SK-N-SH (cell line): ENCODE measurements at regions of chr17 and their contacts with region 1.

Region 1: GRCh38 chr17:75632863-75633485 is at the start of gene SMIM5:
- DNase-seq: peak; percentile 98
- H3K4me3 ChIP-seq: no peak within 1 kb of the TSS; a peak in 1 of 4 replicates
- H3K27ac ChIP-seq: peak within 1 kb of the TSS in 1 of 2 experiments; percentile 59; a peak in 3 of 4 replicates
- H3K4me1 ChIP-seq: peaks cover 12 to 15% of the 10 kb centered on the region in 2 experiments; a peak in 3 of 4 replicates
- H3K27me3 ChIP-seq: no peaks in the 10 kb centered on the region
- CTCF ChIP-seq: peak; percentile 99
- EP300 ChIP-seq: no peak
- RAD21 ChIP-seq: peak; percentile 72
- polyA plus RNA-seq, gene SMIM5: 0.02 TPM in 1 of 2 replicates, not detected in the other

Region 2: DNA sequence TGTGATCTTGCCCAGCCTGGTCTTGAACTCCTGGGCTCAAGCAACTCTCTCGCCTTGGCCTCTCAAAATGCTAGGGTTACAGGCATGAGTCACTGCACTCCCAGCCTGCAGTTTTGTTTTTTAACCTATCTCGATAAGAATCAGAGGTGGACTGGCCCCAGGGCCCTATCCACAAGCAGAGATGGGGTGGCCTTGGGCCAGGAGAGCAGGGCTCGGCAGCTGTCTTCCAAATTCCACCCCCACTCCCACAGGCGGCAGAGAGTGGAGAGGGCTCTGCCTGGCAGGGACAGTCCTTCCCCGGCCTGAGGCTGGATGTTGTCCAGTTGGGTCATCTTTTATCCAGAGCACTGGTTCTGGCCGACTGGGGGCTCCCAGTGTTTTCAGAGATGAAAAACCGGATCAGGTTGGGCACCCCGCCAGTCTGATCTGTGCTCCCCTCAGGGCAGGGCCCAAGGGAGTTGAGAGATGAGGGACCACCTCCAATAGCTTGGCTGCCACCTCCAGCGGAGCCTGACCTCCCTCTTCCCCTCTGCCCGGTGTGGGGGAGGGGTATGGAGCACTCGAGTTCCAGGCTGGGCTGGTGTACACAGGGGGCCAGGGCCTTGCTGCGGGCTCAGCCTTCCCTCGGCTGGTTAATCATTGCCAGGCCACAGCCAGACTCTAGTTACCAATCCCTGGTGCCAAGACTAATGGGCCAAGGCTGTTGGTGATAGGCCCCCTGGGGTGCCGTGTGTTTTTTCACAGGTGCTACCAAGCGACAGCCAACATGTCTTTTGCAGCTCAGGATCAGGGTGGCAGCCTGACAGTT is 75.7 kb before region 1 on chr17:
- CTCF ChIA-PET with region 1: interaction called, 20 read pairs
- POLR2A ChIA-PET with region 1: no interaction called
- DNase-seq: peak; percentile 83
- H3K4me3 ChIP-seq: no peak overlapping the region
- H3K27ac ChIP-seq: peak overlapping the region in 1 of 2 experiments; percentile 65; a peak in 2 of 4 replicates
- H3K4me1 ChIP-seq: peaks cover 4 to 19% of the 10 kb centered on the region in 2 experiments; a peak in 1 of 4 replicates
- H3K27me3 ChIP-seq: no peaks in the 10 kb centered on the region
- CTCF ChIP-seq: no peak
- EP300 ChIP-seq: no peak
- RAD21 ChIP-seq: no peak

Region 3: DNA sequence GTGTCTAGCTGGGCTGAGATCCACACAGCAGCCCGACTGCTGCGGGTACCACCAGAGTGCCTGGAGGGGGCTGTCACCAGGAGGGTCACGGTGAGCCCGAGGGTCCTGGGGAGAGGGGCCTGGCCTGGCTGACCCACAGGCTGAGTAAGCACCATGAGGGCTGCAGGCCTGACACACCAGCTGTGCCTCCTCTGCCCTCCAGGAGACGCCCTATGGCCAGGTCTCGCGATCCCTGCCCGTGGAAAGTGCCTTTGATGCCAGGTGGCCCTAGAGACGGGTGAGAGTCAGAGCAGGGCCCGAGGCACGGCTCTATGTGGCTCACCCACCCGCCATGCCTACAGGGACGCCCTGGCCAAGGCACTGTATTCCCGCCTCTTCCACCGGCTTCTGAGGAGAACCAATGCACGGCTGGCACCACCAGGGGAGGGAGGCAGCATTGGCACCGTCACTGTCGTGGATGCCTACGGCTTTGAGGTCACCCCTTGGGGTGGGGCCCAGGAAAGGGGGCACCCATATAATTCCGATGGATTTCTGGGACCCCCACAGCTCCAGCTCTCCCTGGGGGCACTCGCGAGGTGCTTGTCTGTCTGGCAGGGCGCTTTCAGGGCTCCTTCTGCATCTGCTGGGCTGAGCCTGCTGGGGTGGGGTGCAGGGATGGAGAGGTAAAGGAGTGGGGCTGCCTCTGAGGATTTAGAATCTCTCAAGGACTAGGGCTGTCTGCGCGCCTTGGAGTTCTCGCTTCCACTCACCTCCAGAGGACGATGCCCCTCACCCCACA is 38.3 kb before region 1 on chr17:
- CTCF ChIA-PET with region 1: interaction called, 68 read pairs
- POLR2A ChIA-PET with region 1: no interaction called
- DNase-seq: no peak
- H3K4me3 ChIP-seq: no peak overlapping the region
- H3K27ac ChIP-seq: no peak overlapping the region
- H3K4me1 ChIP-seq: peaks cover 0 to 8% of the 10 kb centered on the region in 2 experiments; a peak in 1 of 4 replicates
- H3K27me3 ChIP-seq: no peaks in the 10 kb centered on the region
- CTCF ChIP-seq: no peak
- EP300 ChIP-seq: no peak
- RAD21 ChIP-seq: 0 out of 2 replicates have a peak, but pooled peaks have one; percentile 4

Region 4: GRCh38 chr17:75667021-75667790 is 34.2 kb after region 1 on chr17 and contains the starts of genes RECQL5 and SAP30BP:
- CTCF ChIA-PET with region 1: interaction called, 1,189 read pairs
- POLR2A ChIA-PET with region 1: no interaction called
- DNase-seq: peak; percentile 96
- H3K4me3 ChIP-seq: peak within 1 kb of the TSS; percentile 94 to 97
- H3K27ac ChIP-seq: peak within 1 kb of the TSS; percentile 79 to 81
- H3K4me1 ChIP-seq: peaks cover 12 to 16% of the 10 kb centered on the region in 2 experiments; a peak in 3 of 4 replicates
- H3K27me3 ChIP-seq: no peaks in the 10 kb centered on the region
- CTCF ChIP-seq: no peak
- EP300 ChIP-seq: no peak
- RAD21 ChIP-seq: no peak
- polyA plus RNA-seq, gene RECQL5: 22.5 and 25.3 TPM in 2 replicates
- polyA plus RNA-seq, gene SAP30BP: 145 and 158 TPM in 2 replicates

Region 5: DNA sequence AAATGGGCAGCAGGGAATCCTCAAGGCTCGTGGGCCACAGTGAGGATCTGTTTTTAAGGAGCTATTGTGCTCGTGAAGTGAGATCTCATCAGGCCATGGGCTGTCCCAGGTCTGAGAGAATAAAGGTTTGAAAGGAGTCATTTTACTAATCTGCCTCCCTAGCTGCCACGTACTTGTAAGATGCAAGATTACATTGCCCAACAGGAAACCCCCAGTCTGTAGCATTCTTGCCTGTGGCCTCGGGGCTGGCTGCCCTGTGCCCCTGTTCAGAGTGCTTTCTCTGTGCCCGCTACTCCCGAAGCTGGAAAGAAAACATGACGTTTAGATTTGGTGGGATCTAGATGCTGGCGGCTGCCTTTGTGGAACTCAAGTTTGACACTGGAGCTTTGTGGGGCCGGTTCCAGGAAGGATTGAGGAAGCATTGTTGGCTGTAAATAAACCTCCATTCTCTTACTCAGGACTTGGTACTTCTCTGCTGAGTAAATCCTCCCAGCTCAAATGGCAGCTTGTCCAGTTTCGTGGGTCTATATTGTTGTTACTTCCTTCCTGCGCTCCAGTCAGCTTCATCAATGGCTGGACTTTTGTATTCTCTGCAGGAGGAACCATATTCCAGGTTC is 55.3 kb after region 1 on chr17:
- CTCF ChIA-PET with region 1: interaction called, 39 read pairs
- POLR2A ChIA-PET with region 1: no interaction called
- DNase-seq: no peak
- H3K4me3 ChIP-seq: no peak overlapping the region
- H3K27ac ChIP-seq: no peak overlapping the region
- H3K4me1 ChIP-seq: peaks cover 25 to 64% of the 10 kb centered on the region in 2 experiments; a peak in 3 of 4 replicates
- H3K27me3 ChIP-seq: no peaks in the 10 kb centered on the region
- CTCF ChIP-seq: no peak
- EP300 ChIP-seq: no peak
- RAD21 ChIP-seq: no peak

Region 6: DNA sequence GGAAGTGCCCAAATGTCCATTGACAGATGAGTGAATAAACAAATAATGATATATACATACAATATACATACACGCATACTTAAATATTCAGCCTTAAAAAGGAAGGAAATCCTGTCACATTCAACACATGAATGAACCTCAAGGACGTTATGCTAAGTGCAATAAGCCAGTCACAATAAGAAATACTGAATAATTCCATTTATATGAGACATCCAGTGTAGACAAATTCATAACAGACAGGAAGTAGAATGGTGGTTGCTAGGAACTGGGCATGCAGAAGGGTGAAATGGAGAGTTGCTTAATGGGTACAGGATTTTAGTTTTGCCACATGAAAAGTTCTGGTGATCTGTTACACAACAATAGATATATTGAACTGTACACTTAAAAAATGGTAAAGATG is 79.5 kb after region 1 on chr17:
- CTCF ChIA-PET with region 1: interaction called, 28 read pairs
- POLR2A ChIA-PET with region 1: no interaction called
- DNase-seq: no peak
- H3K4me3 ChIP-seq: no peak overlapping the region
- H3K27ac ChIP-seq: no peak overlapping the region
- H3K4me1 ChIP-seq: peaks cover 0 to 5% of the 10 kb centered on the region in 2 experiments; a peak in 2 of 4 replicates
- H3K27me3 ChIP-seq: peaks cover 1% of the 10 kb centered on the region; the same call in 1 of the 2 replicates
- CTCF ChIP-seq: no peak
- EP300 ChIP-seq: no peak
- RAD21 ChIP-seq: no peak

Region 7: GRCh38 chr17:75764711-75765421 is 131.9 kb after region 1 on chr17 and contains the start of gene GALK1:
- CTCF ChIA-PET with region 1: interaction called, 1,370 read pairs
- POLR2A ChIA-PET with region 1: no interaction called
- DNase-seq: peak; percentile 98
- H3K4me3 ChIP-seq: peak within 1 kb of the TSS; percentile 58 to 92
- H3K27ac ChIP-seq: peak within 1 kb of the TSS; percentile 33 to 44; a peak in 3 of 4 replicates
- H3K4me1 ChIP-seq: peaks cover 8 to 19% of the 10 kb centered on the region in 2 experiments; a peak in 2 of 4 replicates
- H3K27me3 ChIP-seq: no peaks in the 10 kb centered on the region
- CTCF ChIP-seq: peak; percentile 38
- EP300 ChIP-seq: no peak
- RAD21 ChIP-seq: peak; percentile 49
- polyA plus RNA-seq, gene GALK1: 36.5 and 39.2 TPM in 2 replicates

Region 8: GRCh38 chr17:76281573-76282371 is 648.8 kb after region 1 on chr17:
- CTCF ChIA-PET with region 1: no interaction called
- POLR2A ChIA-PET with region 1: no interaction called
- DNase-seq: no peak
- H3K4me3 ChIP-seq: no peak overlapping the region
- H3K27ac ChIP-seq: no peak overlapping the region
- H3K4me1 ChIP-seq: peaks cover 3 to 5% of the 10 kb centered on the region in 2 experiments; a peak in 1 of 4 replicates
- H3K27me3 ChIP-seq: no peaks in the 10 kb centered on the region
- CTCF ChIP-seq: no peak
- EP300 ChIP-seq: no peak
- RAD21 ChIP-seq: no peak